K562 (cell line): ENCODE measurements at regions of chr12 and their contacts with region 1.

Region 1: GRCh38 chr12:122399592-122400373 is 22.7 kb downstream of the CLIP1 start:
- DNase-seq: peak; percentile 87 to 96 (median 90)
- ATAC-seq: peak; percentile 95
- H3K4me3 ChIP-seq: peak overlapping the region; percentile 33
- H3K27ac ChIP-seq: peak overlapping the region; percentile 99
- H3K4me1 ChIP-seq: peaks cover 6 to 9% of the 10 kb centered on the region in 2 experiments; a peak in 4 of 5 replicates
- H3K27me3 ChIP-seq: no peaks in the 10 kb centered on the region
- CTCF ChIP-seq: peak; percentile 69 to 84 (median 81)
- EP300 ChIP-seq: peak; percentile 76
- POLR2A ChIP-seq: no peak
- RAD21 ChIP-seq: peak; percentile 88 to 92

Region 2: GRCh38 chr12:122412851-122413433 is 13.2 kb after region 1 on chr12:
- CTCF ChIA-PET with region 1: no interaction called
- POLR2A ChIA-PET with region 1: interaction called, 20 read pairs
- in situ Hi-C with region 1: no loop called
- intact Hi-C with region 1: no loop called
- DNase-seq: no peak
- ATAC-seq: no peak
- H3K4me3 ChIP-seq: no peak overlapping the region
- H3K27ac ChIP-seq: no peak overlapping the region; the same call in 2 of the 3 replicates
- H3K4me1 ChIP-seq: no peaks in the 10 kb centered on the region
- H3K27me3 ChIP-seq: no peaks in the 10 kb centered on the region
- CTCF ChIP-seq: no peak
- EP300 ChIP-seq: no peak
- POLR2A ChIP-seq: no peak
- RAD21 ChIP-seq: no peak

Region 3: DNA sequence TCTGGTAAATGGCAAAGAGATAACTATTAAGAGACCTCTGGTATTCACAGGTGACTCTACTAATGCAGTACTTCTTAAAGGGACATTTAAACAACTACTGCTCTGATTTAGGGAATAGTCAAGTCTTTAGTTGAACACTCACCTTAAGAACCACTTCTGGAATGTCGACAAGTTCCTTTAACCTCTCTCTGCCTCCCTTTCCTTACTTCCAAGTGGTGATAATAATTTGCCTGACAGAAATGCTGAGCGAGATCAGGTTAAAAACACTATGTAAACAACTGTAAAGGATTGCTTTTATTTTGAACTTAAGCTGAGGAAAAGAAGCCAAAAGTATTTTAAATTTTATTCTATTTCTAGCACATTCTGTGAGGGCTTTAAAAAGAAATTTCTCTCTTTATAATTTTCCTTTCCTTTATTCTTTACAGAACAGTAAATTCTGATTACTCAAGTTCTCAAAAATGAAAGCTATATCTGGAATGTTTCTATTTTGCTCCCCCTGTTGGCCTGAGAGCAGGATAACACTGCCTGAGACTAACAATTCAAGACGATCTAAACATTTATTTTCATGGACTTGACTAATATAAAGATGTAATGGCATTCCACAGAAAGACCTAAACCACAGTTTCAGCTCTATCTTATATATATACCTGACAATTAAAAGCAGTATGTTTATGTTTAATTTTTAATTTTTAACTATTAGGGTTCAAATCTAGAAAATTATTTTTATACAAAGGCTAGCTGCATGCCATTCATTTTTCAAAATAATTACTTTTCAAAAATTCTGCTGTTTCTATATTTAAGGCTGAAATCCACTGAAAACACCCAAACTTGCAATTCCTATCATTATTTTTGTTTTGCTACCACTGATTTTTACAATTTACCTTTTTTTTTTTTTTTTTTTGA is 71.8 kb after region 1 on chr12:
- CTCF ChIA-PET with region 1: interaction called, 30 read pairs
- POLR2A ChIA-PET with region 1: interaction called, 29 read pairs
- in situ Hi-C with region 1: loop called (anchors 5 kb)
- intact Hi-C with region 1: loop called (anchors 1 kb)
- DNase-seq: peak; percentile 35 to 71 (median 49)
- ATAC-seq: peak; percentile 75
- H3K4me3 ChIP-seq: no peak overlapping the region
- H3K27ac ChIP-seq: peak overlapping the region; percentile 8; the same call in 1 of the 3 replicates
- H3K4me1 ChIP-seq: peaks cover 0 to 5% of the 10 kb centered on the region in 2 experiments; a peak in 1 of 5 replicates
- H3K27me3 ChIP-seq: no peaks in the 10 kb centered on the region
- CTCF ChIP-seq: peak; percentile 57 to 79 (median 59); a peak in 5 of 6 replicates
- EP300 ChIP-seq: no peak
- POLR2A ChIP-seq: no peak
- RAD21 ChIP-seq: peak; percentile 87 to 89

Region 4: DNA sequence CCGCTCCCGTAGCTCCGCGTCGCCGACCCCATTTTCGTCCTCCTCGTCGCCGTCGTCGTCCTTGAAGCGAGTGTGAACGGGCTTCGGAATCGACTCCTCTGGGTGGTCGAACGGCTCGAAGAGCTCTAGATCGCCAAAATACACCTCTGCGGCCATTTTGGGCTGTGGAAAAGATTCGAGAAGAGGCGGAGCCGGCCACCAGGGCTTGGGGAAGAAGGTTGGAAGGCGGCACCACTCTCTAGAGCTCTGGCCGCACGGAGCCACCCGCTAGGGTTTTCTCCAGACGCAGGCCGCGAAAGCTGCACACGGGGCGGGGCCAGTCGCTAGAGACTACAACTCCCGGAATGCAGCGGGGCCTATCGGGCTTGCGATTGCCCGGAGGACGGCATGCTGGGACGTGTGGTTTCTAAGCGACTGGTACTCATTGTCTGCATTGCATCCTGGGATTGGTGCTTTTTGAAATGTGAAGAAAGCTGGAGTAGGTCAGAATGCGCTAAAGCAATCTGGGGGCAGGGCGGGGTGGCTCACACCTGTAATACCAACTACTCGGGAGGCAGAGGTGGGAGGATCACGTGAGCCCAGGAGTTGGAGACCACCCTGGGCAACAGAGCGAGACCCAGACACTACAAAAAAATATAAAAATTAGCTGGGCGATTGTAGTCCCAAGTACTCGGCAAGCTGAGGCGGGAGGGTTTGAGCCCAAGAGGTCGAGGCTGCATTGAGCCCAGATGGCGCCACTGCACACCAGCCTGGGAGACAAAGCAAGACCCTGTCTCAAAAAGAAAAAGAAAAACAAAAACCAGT is 101.1 kb after region 1 on chr12 and contains the start of gene ZCCHC8:
- CTCF ChIA-PET with region 1: no interaction called
- POLR2A ChIA-PET with region 1: interaction called, 28 read pairs
- in situ Hi-C with region 1: no loop called
- intact Hi-C with region 1: no loop called
- DNase-seq: peak; percentile 89 to 99 (median 92)
- ATAC-seq: peak; percentile 91
- H3K4me3 ChIP-seq: peak within 1 kb of the TSS; percentile 94
- H3K27ac ChIP-seq: peak within 1 kb of the TSS; percentile 99
- H3K4me1 ChIP-seq: peaks cover 6 to 11% of the 10 kb centered on the region in 2 experiments; a peak in 3 of 5 replicates
- H3K27me3 ChIP-seq: no peaks in the 10 kb centered on the region
- CTCF ChIP-seq: peak in 2 of 3 experiments; percentile 12 to 16; a peak in 2 of 6 replicates
- EP300 ChIP-seq: peak; percentile 23; the same call in 1 of the 2 replicates
- POLR2A ChIP-seq: peak; percentile 96
- RAD21 ChIP-seq: no peak
- polyA plus RNA-seq, gene ZCCHC8: 14.8 to 20.7 TPM

Region 5: GRCh38 chr12:122545855-122546254 is 146.1 kb after region 1 on chr12:
- CTCF ChIA-PET with region 1: no interaction called
- POLR2A ChIA-PET with region 1: no interaction called
- in situ Hi-C with region 1: no loop called
- intact Hi-C with region 1: no loop called
- DNase-seq: no peak
- ATAC-seq: no peak
- H3K4me3 ChIP-seq: no peak overlapping the region
- H3K27ac ChIP-seq: no peak overlapping the region
- H3K4me1 ChIP-seq: no peaks in the 10 kb centered on the region
- H3K27me3 ChIP-seq: no peaks in the 10 kb centered on the region
- CTCF ChIP-seq: no peak
- EP300 ChIP-seq: no peak
- POLR2A ChIP-seq: no peak
- RAD21 ChIP-seq: no peak

Region 6: DNA sequence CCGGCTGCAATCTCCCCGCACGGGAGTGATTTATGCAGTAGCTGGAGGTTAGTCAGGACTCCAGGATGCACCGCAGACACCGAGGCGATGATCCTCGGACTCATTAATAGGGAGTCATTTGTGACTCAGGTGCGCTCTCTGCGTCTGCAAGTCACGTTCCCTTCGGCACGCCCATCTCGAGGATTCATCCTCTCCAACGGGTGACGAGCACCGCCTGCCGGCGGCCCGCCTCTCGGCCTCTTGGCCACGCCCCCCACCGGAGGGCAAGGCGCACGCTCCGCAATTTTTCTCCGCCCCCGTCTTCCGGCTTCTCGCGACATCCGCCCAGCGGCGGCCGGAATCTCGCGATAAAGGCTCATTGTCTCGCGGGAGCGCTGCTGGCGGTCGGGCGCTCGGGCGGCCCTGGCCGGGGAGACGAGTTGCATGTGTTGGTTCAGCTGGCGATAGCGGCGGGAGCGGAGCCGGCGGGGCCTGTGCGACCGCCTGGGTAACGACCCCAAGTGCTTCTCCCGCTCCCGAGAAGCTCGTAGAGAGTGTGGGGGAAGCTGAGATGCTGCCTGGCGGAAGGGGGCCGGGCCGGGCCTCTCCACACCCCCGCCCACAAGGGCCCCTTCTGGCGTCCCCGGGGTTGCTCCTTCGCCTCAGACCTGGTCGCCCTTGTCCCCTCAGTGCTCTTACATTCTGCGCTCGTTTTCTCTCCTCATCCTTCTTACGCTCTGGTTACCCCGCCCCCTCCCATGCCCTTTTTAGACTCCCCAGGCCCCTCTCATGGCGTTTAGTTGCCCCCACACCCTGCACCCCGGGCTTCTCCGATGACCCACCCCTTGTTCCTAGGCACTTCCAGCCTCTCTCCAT is 352.9 kb after region 1 on chr12 and contains the start of gene DENR:
- CTCF ChIA-PET with region 1: no interaction called
- POLR2A ChIA-PET with region 1: interaction called, 5 read pairs
- in situ Hi-C with region 1: no loop called
- intact Hi-C with region 1: loop called (anchors 10 kb)
- DNase-seq: peak; percentile 95 to 98 (median 96)
- ATAC-seq: peak; percentile 94
- H3K4me3 ChIP-seq: peak within 1 kb of the TSS; percentile 77
- H3K27ac ChIP-seq: peak within 1 kb of the TSS; percentile 87
- H3K4me1 ChIP-seq: peaks cover 31 to 33% of the 10 kb centered on the region in 2 experiments; a peak in 4 of 5 replicates
- H3K27me3 ChIP-seq: no peaks in the 10 kb centered on the region
- CTCF ChIP-seq: peak; percentile 96 to 98 (median 98)
- EP300 ChIP-seq: no peak
- POLR2A ChIP-seq: peak; percentile 97
- RAD21 ChIP-seq: peak; percentile 97 to 100
- polyA plus RNA-seq, gene DENR: 32.5 to 40.1 TPM